ENCODE measurements at regions of chr18 and their contacts with region 1.

Region 1: GRCh38 chr18:36129300-36130038 is at the starts of genes ELP2 and SLC39A6:
- DNase-seq: peak; percentile 93
- ATAC-seq: peak; percentile 91
- H3K4me3 ChIP-seq: peak within 1 kb of the TSS; percentile 89
- H3K27ac ChIP-seq: peak within 1 kb of the TSS; percentile 89
- H3K4me1 ChIP-seq: peaks cover 8% of the 10 kb centered on the region
- H3K27me3 ChIP-seq: no peaks in the 10 kb centered on the region
- CTCF ChIP-seq: 0 out of 2 replicates have a peak, but pooled peaks have one; percentile 1
- POLR2A ChIP-seq: peak; percentile 69
- RAD21 ChIP-seq: no peak; the same call in 1 of the 2 replicates
- total RNA-seq, gene ELP2: 97.2 and 161 TPM in 2 replicates
- total RNA-seq, gene SLC39A6: 86.1 and 91.9 TPM in 2 replicates

Region 2: DNA sequence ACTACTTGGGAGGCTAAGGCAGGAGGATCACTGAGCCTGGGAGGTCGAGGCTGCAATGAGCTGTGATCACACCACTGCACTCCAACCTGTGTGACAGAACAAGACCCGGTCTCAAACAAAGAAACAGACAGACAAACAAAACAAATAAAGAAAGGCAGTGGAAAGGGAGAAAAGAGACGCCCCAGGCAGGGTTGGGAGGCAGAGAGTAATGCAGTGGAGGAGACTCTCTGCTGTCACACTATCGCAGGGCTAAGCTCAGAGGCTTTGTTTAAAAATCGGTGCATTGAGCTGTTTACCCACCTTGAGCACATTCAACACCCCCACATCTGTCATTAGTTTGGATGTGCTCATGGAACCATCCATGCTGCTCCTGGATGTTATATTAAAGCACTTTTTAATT is 241.1 kb before region 1 on chr18:
- CTCF ChIA-PET with region 1: no interaction called
- POLR2A ChIA-PET with region 1: interaction called, 15 read pairs
- dilution Hi-C with region 1: no loop called
- in situ Hi-C with region 1: no loop called
- intact Hi-C with region 1: no loop called
- DNase-seq: no peak
- ATAC-seq: no peak
- H3K4me3 ChIP-seq: no peak overlapping the region
- H3K27ac ChIP-seq: no peak overlapping the region
- H3K4me1 ChIP-seq: no peaks in the 10 kb centered on the region
- H3K27me3 ChIP-seq: peaks cover 8% of the 10 kb centered on the region
- CTCF ChIP-seq: no peak
- POLR2A ChIP-seq: no peak
- RAD21 ChIP-seq: no peak

Region 3: GRCh38 chr18:36023336-36023735 is 106.1 kb before region 1 on chr18:
- CTCF ChIA-PET with region 1: no interaction called
- POLR2A ChIA-PET with region 1: no interaction called
- dilution Hi-C with region 1: no loop called
- in situ Hi-C with region 1: no loop called
- intact Hi-C with region 1: loop called (anchors 5 kb)
- DNase-seq: no peak
- ATAC-seq: no peak
- H3K4me3 ChIP-seq: no peak overlapping the region
- H3K27ac ChIP-seq: no peak overlapping the region
- H3K4me1 ChIP-seq: peaks cover 7% of the 10 kb centered on the region
- H3K27me3 ChIP-seq: no peaks in the 10 kb centered on the region
- CTCF ChIP-seq: no peak
- POLR2A ChIP-seq: no peak
- RAD21 ChIP-seq: no peak

Region 4: GRCh38 chr18:36158261-36158867 is 28.9 kb after region 1 on chr18:
- CTCF ChIA-PET with region 1: no interaction called
- POLR2A ChIA-PET with region 1: no interaction called
- dilution Hi-C with region 1: no loop called
- in situ Hi-C with region 1: no loop called
- intact Hi-C with region 1: loop called (anchors 1 kb)
- DNase-seq: peak; percentile 94
- ATAC-seq: peak; percentile 80
- H3K4me3 ChIP-seq: no peak overlapping the region
- H3K27ac ChIP-seq: peak overlapping the region; percentile 85
- H3K4me1 ChIP-seq: peaks cover 18% of the 10 kb centered on the region
- H3K27me3 ChIP-seq: no peaks in the 10 kb centered on the region
- CTCF ChIP-seq: no peak
- POLR2A ChIP-seq: no peak
- RAD21 ChIP-seq: peak; percentile 17; the same call in 1 of the 2 replicates

Region 5: DNA sequence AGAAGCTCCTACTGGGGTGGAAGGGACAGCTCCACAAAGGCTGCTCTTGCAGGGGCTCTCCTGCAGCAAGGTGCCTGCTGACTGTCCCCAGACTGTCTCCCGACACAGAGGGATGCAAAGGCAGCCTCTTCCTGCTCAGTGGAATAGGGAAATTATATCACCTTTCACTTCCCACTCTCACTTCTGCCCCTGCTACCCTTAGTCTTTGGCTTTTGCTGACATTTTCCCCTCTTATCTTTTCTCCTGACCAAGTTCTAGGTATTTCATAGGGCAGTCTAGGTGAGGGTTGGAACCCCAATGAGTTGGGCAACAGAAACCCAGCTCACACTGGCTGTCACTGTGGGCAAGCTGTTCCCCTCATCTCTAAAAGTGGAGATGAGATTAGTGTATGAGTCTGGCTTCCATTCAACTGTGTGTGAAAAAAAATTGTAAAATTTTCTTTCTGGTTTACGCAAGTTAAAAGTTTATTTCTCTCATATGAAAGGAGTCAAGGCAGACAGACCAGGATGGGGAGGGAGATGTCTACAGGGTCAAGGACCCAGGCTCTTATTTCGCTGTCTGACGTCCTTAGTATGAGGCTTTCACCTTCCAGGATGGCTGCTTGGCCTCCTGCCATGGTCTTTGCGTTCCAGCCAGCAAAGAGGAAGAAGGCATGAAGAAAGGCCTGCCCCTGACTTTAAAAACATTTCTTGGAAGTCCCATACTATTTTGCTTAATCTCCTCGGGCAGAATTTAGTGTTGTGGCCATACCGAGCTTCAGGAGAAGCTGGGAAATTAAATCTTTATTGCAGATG is 50.3 kb after region 1 on chr18:
- CTCF ChIA-PET with region 1: no interaction called
- POLR2A ChIA-PET with region 1: interaction called, 5 read pairs
- dilution Hi-C with region 1: no loop called
- in situ Hi-C with region 1: no loop called
- intact Hi-C with region 1: loop called (anchors 2 kb)
- DNase-seq: peak; percentile 96
- ATAC-seq: peak; percentile 84
- H3K4me3 ChIP-seq: no peak overlapping the region
- H3K27ac ChIP-seq: peak overlapping the region; percentile 95; the same call in 1 of the 2 replicates
- H3K4me1 ChIP-seq: peaks cover 10% of the 10 kb centered on the region
- H3K27me3 ChIP-seq: no peaks in the 10 kb centered on the region
- CTCF ChIP-seq: no peak
- POLR2A ChIP-seq: no peak
- RAD21 ChIP-seq: no peak

Region 6: GRCh38 chr18:36284671-36285295 is 155.3 kb after region 1 on chr18:
- CTCF ChIA-PET with region 1: no interaction called
- POLR2A ChIA-PET with region 1: no interaction called
- dilution Hi-C with region 1: no loop called
- in situ Hi-C with region 1: no loop called
- intact Hi-C with region 1: loop called (anchors 1 kb)
- DNase-seq: peak; percentile 74
- ATAC-seq: peak; percentile 89
- H3K4me3 ChIP-seq: no peak overlapping the region
- H3K27ac ChIP-seq: no peak overlapping the region
- H3K4me1 ChIP-seq: no peaks in the 10 kb centered on the region
- H3K27me3 ChIP-seq: peaks cover 4% of the 10 kb centered on the region
- CTCF ChIP-seq: peak; percentile 96
- POLR2A ChIP-seq: peak; percentile 59; the same call in 1 of the 2 replicates
- RAD21 ChIP-seq: peak; percentile 98

Measured in IMR-90 (cell line).